GM13977 (cell line): ENCODE measurements at regions of chr10 and their contacts with region 1.

Region 1: GRCh38 chr10:32055813-32056600 is at the start of gene KIF5B:
- DNase-seq: peak; percentile 96
- CTCF ChIP-seq: no peak

Region 2: DNA sequence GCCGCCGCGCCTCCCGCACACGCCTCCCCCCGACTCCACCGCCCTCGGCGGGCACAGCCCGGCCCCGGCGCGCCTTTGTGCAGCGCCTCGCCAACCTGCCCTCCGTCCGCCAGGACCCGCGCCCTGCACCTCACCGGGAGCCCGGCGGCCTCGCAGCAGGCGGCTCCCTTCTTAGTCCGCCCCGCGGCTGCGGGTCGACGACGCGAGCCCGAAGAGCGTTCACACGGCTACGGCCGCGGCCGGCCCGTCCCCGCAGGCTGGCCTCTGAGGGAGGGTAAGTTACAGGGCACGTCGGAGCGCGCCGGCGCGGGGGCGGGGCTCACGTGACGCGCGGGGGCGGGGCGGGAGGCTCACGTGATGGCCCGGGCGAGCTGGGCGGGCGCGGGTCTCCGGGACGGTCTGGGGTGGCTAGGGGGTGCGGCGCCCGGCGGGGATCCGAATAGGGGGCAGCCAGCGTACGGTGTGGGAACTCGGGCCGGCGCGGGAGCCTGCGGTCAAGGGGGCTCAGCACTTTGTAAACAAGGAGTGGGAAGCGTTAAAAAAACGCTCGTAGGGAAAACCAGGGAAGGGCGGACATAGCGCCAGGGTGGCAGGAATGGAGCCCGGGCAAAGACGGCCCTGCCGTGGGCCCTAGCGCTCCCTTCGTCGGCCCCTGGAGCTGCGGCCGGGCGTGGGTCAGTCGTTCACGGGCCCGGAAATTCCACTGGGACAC is 127.3 kb before region 1 on chr10 and contains the start of gene ARHGAP12:
- in situ Hi-C with region 1: no loop called
- DNase-seq: peak; percentile 87
- CTCF ChIP-seq: no peak

Region 3: GRCh38 chr10:32367793-32368453 is 311.9 kb after region 1 on chr10:
- in situ Hi-C with region 1: loop called (anchors 25 kb)
- DNase-seq: no peak
- CTCF ChIP-seq: peak; percentile 64

Region 4: DNA sequence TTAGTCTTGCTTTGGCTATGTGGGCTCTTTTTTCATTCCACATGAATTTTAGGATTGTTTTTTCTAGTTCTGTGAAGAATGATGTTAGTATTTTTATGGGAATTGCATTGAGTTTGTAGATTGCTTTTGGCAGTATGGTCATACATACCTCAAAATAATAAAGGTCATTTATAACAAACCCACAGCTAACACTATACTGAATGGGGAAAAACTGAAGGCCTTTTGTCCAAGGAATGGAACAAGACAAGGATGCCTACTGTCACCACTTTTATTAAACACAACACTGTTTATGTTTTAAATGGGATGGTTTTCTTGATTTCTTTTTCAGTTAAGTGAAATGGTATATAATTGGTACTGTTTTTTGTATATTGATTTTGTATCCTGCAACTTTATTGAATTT is 474.2 kb after region 1 on chr10:
- in situ Hi-C with region 1: no loop called
- DNase-seq: no peak
- CTCF ChIP-seq: no peak